Heart right ventricle (tissue), 16 donors: ENCODE measurements at regions of chr16 and their contacts with region 1.

Region 1: GRCh38 chr16:84484579-84485254 is 19.7 kb downstream of the MEAK7 start:
- DNase-seq: peak; percentile 66 to 76
- ATAC-seq: peak; percentile 67 to 89 (median 84)
- H3K4me3 ChIP-seq: no peak overlapping the region
- H3K27ac ChIP-seq: no peak overlapping the region
- H3K4me1 ChIP-seq: peaks cover 0 to 21% (median 0%) of the 10 kb centered on the region in 9 donors
- H3K27me3 ChIP-seq: no peaks in the 10 kb centered on the region
- CTCF ChIP-seq: peak; percentile 62 to 92 (median 86)

Region 2: GRCh38 chr16:83826146-83826913 is 658.4 kb before region 1 on chr16:
- intact Hi-C with region 1: loop called in 1 of 10 experiments (anchors 10 kb)
- DNase-seq: peak; percentile 83 to 86
- ATAC-seq: peak; percentile 89 to 96 (median 92)
- H3K4me3 ChIP-seq: no peak overlapping the region
- H3K27ac ChIP-seq: no peak overlapping the region
- H3K4me1 ChIP-seq: peaks cover 0 to 7% (median 0%) of the 10 kb centered on the region in 9 donors
- H3K27me3 ChIP-seq: peaks cover 0 to 4% (median 0%) of the 10 kb centered on the region in 7 donors
- CTCF ChIP-seq: peak; percentile 83 to 95 (median 94)

Region 3: DNA sequence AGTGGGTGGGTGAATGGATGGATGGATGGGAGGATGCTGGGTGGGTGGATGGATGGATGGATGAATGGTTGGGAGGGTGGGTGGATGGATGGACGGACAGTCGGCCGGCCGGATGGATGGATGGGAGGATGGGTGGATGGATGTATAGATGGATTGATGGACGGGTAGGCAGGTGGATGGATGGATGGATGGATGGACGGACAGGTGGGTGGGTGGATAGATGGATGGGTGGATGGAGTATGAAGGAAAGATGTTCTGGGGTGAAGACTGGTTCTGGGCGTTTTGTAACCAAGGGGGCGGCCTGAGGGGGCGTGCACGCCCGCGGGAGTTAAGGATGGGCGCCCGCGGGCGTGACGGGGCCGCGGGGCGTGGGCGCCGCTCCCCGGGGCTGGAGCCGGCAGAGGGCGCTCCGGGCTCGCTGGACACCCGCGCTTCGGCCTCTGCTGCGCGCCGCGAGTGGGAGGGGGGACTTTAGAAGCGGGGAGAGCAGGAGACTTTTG is 516.9 kb before region 1 on chr16 and contains the start of gene NECAB2:
- intact Hi-C with region 1: loop called in 5 of 10 experiments (anchors 2 to 10 kb)
- DNase-seq: peak; percentile 40 to 62
- ATAC-seq: peak in 6 of 8 donors; percentile 22 to 65 (median 42)
- H3K4me3 ChIP-seq: peak within 1 kb of the TSS in 9 of 10 donors; percentile 29 to 47 (median 38)
- H3K27ac ChIP-seq: no peak within 1 kb of the TSS
- H3K4me1 ChIP-seq: peaks cover 0 to 10% (median 0%) of the 10 kb centered on the region in 9 donors
- H3K27me3 ChIP-seq: peaks cover 0 to 24% (median 8%) of the 10 kb centered on the region in 7 donors
- CTCF ChIP-seq: peak; percentile 33 to 81 (median 69)
- total RNA-seq, gene NECAB2: 0.32 to 1.1 (median 0.90) TPM

Region 4: DNA sequence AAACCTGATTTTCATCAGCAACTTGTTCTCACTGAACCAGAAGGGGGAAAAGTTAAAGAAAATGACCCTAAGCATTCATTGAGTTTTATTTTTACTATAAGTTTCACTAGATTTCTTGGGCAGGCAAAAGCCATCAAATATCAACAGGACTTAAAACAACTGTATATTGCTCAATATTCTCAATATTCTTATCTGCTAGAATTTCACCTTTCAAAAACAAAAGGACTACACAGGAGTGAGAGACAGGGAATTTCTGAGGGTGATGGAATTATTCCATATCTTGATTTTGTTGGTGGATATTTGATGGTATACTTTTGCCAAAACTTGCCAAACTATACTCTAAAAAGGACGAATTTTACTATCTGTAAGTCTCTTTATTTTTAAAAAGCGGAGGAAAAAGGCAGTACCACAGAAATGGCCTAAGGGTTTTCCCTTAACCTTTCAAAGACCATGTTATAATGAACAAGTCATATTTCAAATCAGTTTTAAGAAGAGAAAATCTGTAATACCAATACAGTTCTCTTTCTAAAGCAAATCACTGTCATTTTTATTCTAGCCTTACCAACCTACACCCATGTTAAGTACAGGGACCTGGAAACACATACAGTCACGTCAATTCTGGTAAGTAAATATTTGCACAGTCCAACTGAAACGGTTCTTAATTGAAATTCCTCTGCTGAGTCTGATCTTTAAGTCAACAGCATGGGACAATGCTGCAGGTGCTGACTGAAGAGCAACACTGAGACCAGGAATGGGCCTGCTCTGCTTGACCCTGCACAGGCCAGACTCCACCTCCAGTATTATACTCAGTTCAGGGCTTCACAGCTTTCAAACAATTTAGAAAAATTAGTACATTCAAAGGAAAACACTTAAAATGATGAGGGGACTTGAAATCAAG is 388.4 kb before region 1 on chr16:
- intact Hi-C with region 1: loop called in 1 of 10 experiments (anchors 10 kb)
- DNase-seq: no peak
- ATAC-seq: peak in 1 of 8 donors; percentile 29
- H3K4me3 ChIP-seq: no peak overlapping the region
- H3K27ac ChIP-seq: peak overlapping the region in 1 of 10 donors; percentile 8
- H3K4me1 ChIP-seq: peaks cover 0 to 28% (median 6%) of the 10 kb centered on the region in 9 donors
- H3K27me3 ChIP-seq: no peaks in the 10 kb centered on the region
- CTCF ChIP-seq: no peak

Region 5: GRCh38 chr16:84277237-84277823 is 207.4 kb before region 1 on chr16:
- intact Hi-C with region 1: loop called (anchors 1 to 5 kb)
- DNase-seq: peak; percentile 57 to 76
- ATAC-seq: peak in 6 of 8 donors; percentile 57 to 76 (median 70)
- H3K4me3 ChIP-seq: no peak overlapping the region
- H3K27ac ChIP-seq: no peak overlapping the region
- H3K4me1 ChIP-seq: no peaks in the 10 kb centered on the region
- H3K27me3 ChIP-seq: peaks cover 0 to 25% (median 0%) of the 10 kb centered on the region in 7 donors
- CTCF ChIP-seq: peak; percentile 78 to 94 (median 88)